ENCODE measurements at regions of chr7 and their contacts with region 1.

Region 1: DNA sequence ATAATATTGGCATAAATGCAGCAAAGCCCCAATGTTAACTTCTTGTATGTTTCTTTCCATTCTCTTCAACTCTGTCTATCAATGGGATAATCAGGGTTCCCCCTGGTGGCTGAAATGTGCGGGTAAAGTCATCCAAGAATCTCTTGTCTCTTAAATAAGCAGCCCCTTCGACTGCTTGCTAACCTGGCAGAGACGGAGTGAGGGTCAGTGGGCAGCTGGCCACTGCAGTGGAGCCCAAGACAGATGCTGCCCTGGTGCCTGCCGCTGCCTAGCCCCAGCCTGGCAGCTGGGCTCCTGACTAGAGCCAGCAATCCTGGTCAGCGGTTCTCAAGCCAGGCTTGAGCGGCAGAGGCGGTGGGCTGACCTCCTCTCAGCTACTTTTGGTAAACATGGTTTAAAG is 248.9 kb downstream of the COBL start:
- DNase-seq: peak in 1 of 2 donors; percentile 76
- ATAC-seq: peak; percentile 36 to 59 (median 48)
- H3K4me3 ChIP-seq: no peak overlapping the region
- H3K27ac ChIP-seq: peak overlapping the region in 4 of 10 donors; percentile 4 to 38 (median 31)
- H3K4me1 ChIP-seq: peaks cover 9 to 39% (median 27%) of the 10 kb centered on the region in 9 donors
- H3K27me3 ChIP-seq: no peaks in the 10 kb centered on the region
- CTCF ChIP-seq: peak; percentile 58 to 85 (median 76)

Region 2: DNA sequence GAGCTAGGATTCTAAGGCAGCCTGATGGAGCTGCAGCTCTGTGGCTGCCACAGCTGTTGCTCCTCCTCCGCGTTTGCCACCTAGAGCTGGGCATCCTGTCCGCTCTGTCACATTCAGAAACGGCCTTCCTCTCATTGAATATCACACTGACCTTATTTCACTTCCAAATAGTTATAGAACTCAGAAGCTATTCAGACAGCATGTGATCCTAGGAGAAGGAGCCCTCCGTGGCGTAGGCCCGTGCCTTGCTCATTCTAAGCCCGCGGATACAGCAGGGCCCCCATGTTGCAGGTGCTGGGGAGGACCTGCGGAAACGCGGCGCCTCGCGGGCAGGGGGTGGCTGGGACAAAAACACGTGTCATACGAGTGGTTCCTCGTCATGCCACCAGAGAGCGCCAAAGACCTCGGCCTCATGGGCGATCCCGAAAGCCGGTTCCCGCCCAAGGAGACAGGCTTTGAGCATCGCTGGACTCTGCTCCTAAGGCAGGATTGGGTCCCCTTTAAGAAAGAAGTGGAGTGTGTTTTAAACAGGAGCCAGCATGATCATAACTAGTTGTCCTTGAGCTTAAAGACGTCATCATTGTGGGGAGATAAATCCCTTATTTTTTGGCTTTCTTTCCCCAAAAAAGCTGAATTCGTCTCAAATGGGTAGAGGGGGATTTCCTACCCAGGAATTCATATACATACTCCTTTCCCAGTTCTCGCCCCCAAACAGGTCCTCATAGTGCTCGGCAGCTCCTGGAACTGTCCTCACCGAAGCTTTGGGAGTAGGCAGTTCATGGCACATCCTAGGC is 599.7 kb before region 1 on chr7:
- intact Hi-C with region 1: loop called in 4 of 10 experiments (anchors 5 to 10 kb)
- DNase-seq: peak; percentile 80 to 83
- ATAC-seq: peak; percentile 77 to 95 (median 93)
- H3K4me3 ChIP-seq: peak overlapping the region in 2 of 10 donors; percentile 20 to 21
- H3K27ac ChIP-seq: no peak overlapping the region
- H3K4me1 ChIP-seq: peaks cover 0 to 10% (median 0%) of the 10 kb centered on the region in 9 donors
- H3K27me3 ChIP-seq: peaks cover 0 to 7% (median 0%) of the 10 kb centered on the region in 7 donors
- CTCF ChIP-seq: peak; percentile 88 to 95 (median 91)

Region 3: DNA sequence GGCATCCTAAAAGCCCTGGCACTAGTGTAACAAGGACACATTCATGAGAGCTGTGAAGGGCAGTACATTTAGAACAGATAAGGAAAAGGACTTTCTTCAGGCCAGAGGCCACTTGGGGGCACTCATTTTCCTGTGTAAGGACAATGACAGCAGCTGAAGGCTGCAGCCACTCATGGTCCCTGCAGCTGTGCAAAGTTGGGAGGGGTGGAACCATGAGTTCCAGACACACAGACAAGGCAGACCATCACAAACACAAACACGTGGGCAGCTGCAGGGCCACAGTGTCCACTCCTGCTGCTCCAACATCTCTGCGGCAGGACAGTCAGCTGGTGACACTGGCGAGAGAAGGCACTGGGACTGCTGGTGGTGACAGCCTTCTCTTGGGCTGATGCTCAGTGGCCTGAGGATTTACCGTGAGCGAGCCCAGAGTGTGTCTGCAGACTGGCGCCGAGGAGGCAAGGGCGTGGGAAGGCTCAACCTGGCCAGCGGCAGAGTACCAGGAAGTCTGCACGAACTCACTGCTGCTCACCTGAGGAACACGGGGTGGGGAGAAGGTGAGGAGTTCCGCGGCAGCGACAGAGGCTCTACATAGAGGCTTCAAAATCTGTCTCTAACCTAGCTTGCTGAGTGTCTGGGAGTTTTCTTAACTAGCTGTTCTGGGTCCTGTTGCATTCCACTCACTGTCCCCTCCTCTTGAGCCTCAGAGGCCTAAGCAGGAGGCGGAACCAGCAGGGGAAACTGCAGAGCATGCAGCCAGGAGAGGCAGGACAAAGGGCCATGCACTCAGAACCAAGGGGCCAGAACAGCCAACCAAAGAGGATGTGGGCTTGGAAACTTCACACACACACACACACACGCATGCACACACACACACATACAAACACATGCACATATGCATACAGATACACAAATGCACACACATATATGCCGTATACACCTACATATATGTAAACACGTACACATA is 426.0 kb before region 1 on chr7:
- intact Hi-C with region 1: loop called in 1 of 10 experiments (anchors 10 kb)
- DNase-seq: peak in 1 of 2 donors; percentile 53
- ATAC-seq: peak; percentile 77 to 95 (median 90)
- H3K4me3 ChIP-seq: no peak overlapping the region
- H3K27ac ChIP-seq: peak overlapping the region in 8 of 10 donors; percentile 7 to 79 (median 50)
- H3K4me1 ChIP-seq: peaks cover 4 to 33% (median 17%) of the 10 kb centered on the region in 9 donors
- H3K27me3 ChIP-seq: no peaks in the 10 kb centered on the region
- CTCF ChIP-seq: peak in 8 of 9 donors; percentile 12 to 55 (median 34)

Region 4: GRCh38 chr7:50687575-50688225 is 380.1 kb before region 1 on chr7:
- intact Hi-C with region 1: loop called in 3 of 10 experiments (anchors 5 to 10 kb)
- DNase-seq: no peak
- ATAC-seq: peak in 5 of 8 donors; percentile 21 to 70 (median 61)
- H3K4me3 ChIP-seq: no peak overlapping the region
- H3K27ac ChIP-seq: peak overlapping the region in 3 of 10 donors; percentile 13 to 38 (median 19)
- H3K4me1 ChIP-seq: peaks cover 7 to 64% (median 40%) of the 10 kb centered on the region in 9 donors
- H3K27me3 ChIP-seq: no peaks in the 10 kb centered on the region
- CTCF ChIP-seq: no peak

Region 5: DNA sequence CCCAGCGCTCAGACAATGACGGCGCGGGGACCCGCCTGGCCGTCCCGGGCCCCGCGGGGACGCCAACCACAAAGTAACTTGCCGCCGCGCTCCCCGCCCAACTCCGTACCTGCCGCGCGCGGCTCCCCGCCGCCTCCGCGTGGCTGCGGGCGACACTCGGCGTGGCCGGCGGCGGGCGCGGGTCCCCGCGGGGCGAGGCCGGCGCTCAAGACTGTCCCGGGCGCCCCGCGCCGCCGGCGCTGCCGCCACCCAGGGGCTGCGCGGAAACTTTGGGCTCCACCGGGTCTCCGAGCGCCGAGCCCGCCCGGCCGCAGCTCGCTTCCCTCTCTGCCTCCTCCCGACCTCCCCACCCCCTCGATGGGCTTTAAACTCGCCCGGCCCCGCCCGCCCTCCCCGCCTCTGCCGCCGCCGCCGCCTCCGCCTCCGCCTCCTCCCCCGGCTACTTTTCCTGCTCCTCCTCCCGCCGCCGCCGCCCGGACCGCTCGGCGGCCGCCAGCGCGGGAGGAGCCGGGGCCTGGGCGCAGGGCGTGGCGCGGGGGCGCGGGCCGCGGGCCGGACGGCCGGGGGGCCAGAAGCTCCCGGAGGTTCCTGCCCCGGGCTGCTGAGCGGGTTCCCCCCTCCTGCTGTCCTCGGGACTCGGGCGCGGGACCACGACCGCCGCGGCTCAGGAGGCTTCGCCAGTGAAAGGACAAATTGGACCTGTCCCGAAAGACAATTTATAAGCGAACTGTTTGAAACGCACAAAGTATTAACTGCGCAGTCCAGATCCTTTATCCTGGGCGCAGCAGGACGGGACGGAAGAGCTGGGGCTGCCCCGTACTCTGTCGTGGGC is 274.4 kb before region 1 on chr7:
- intact Hi-C with region 1: loop called in 6 of 10 experiments (anchors 5 to 10 kb)
- DNase-seq: peak; percentile 79 to 80
- ATAC-seq: peak; percentile 66 to 89 (median 82)
- H3K4me3 ChIP-seq: peak overlapping the region in 9 of 10 donors; percentile 54 to 94 (median 72)
- H3K27ac ChIP-seq: peak overlapping the region; percentile 74 to 94 (median 81)
- H3K4me1 ChIP-seq: peaks cover 0 to 44% (median 29%) of the 10 kb centered on the region in 9 donors
- H3K27me3 ChIP-seq: peaks cover 0 to 9% (median 0%) of the 10 kb centered on the region in 7 donors
- CTCF ChIP-seq: no peak

Region 6: GRCh38 chr7:50953820-50954219 is 113.9 kb before region 1 on chr7:
- intact Hi-C with region 1: loop called in 1 of 10 experiments (anchors 10 kb)
- DNase-seq: peak in 1 of 2 donors; percentile 19
- ATAC-seq: peak; percentile 67 to 95 (median 88)
- H3K4me3 ChIP-seq: no peak overlapping the region
- H3K27ac ChIP-seq: peak overlapping the region in 8 of 10 donors; percentile 8 to 61 (median 32)
- H3K4me1 ChIP-seq: peaks cover 0 to 31% (median 20%) of the 10 kb centered on the region in 9 donors
- H3K27me3 ChIP-seq: no peaks in the 10 kb centered on the region
- CTCF ChIP-seq: no peak

Measured in heart right ventricle (tissue), 16 donors.